Cardiac septum (tissue), 1 donor: ENCODE measurements at regions of chr7 and their contacts with region 1.

Region 1: DNA sequence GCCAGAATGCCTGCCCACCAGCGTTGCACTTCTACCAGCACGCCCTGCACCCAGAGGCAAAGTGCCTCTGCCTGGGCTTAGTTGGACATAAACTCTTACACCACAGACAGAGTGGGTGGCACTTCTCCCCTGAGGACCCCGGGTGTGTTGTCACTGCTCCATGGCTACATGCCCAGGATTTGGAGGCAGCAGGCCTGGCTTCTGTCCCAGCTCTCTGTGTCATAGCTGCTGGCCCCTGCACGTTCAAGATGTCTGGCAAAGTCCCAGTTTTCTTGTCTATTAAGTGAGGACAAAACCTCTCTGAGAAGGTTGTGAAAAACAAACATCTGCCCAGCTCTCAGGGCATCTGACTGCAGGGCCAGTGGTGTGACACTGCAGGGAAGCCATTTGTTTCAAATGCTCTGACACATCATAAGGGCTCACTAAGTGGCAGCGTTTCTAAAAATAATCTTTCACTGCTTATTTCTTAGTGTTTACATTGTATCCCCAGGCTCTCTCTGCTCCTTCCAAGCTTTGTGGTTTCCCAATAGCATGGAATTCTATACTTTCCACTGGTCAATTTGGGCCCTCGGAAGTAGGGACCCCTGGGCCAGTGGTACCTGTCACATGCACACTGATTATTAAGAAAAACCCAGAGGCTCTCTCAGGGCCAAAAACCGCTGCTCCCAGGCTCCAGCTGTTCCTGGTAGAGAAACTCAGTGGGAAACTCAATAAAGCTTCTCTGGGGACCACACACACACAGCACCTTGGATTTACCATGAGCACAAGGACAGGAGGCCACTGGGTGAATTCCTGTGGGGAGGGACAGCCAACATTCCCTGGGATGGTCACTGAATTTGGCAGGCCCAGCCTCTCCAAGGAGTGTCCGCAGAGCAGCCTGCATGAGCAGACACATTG is 86.2 kb upstream of the ANLN start:
- DNase-seq: peak; percentile 89

Region 2: GRCh38 chr7:35694781-35695472 is 608.5 kb before region 1 on chr7 and contains the start of gene HERPUD2:
- intact Hi-C with region 1: loop called (anchors 10 kb)
- DNase-seq: peak; percentile 99
- total RNA-seq, gene HERPUD2: 17.5 TPM